H1 (cell line): ENCODE measurements at regions of chr2 and their contacts with region 1.

Region 1: DNA sequence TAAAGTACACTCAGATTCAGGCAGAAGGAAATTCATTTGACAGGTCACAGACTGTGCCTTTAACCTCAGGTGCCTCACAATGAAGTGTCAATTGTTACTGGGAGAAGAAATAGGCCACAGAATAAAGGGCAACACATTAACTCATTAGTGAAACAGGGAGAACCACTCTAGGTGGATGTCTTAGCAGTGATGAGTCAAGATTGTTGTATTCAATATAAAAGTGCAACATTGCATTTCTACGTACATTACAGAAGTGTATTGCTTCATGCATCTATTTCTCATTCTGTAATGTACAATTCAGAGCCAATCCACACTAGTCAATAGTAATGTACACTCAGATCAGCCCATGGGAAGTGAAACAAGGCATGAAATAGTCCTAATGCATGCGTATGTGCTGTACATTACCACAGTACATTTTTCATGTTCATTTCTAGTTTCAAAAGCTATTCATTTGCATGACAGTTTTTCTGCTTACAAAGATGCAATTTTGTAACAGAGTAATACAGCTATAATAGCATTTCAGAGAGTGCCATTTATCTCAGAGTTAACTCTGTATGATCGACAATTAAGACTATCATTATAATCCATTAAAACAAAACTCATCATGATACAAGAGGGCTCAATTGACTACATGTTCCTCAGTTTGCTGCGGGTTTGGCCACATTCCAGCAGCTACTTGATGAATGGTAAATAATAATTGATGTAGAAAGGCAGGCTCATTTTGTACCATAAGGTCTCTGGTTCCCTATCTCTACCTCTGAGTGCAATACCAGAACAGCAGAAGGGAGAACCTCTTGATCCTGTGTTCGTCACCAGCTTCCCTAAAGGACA is 12.2 kb upstream of the ARL5A start:
- DNase-seq: no peak
- H3K4me3 ChIP-seq: no peak overlapping the region
- H3K27ac ChIP-seq: no peak overlapping the region
- H3K4me1 ChIP-seq: no peaks in the 10 kb centered on the region
- H3K27me3 ChIP-seq: no peaks in the 10 kb centered on the region
- CTCF ChIP-seq: no peak
- EP300 ChIP-seq: no peak
- POLR2A ChIP-seq: no peak
- RAD21 ChIP-seq: no peak

Region 2: GRCh38 chr2:151851761-151852160 is 11.3 kb after region 1 on chr2:
- CTCF ChIA-PET with region 1: interaction called, 12 read pairs
- POLR2A ChIA-PET with region 1: no interaction called
- DNase-seq: no peak
- H3K4me3 ChIP-seq: no peak overlapping the region
- H3K27ac ChIP-seq: no peak overlapping the region
- H3K4me1 ChIP-seq: no peaks in the 10 kb centered on the region
- H3K27me3 ChIP-seq: no peaks in the 10 kb centered on the region
- CTCF ChIP-seq: no peak
- EP300 ChIP-seq: no peak
- POLR2A ChIP-seq: no peak
- RAD21 ChIP-seq: no peak